Testis (tissue), 5 donors: ENCODE measurements at regions of chr18 and their contacts with region 1.

Region 1: DNA sequence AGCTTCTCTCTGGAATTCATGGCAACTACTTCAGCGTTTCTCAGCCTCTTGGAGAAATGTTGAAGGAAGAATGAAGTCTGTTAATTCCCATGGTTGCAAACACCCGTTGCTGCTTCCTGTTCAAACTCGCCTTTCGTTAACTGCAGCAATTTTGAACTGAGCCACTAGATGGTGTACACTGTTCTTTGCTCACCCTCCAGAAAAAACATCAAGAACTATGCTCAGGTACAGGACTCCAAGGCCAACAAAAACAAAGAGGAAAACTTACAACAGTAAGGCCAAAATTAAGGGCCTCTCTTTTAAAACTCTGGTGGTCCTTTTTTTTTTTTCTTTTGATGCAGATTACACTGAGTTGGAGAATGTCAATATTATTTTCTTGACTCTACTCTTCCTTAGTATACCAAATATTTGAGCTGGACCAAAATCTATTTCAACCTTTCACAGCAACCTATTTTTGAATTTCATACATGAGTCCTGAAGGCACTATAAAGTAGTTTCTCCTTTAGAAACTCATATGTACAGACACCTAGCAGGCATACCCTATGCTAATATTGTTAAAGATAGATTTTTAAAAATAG is 58.2 kb downstream of the KLHL14 start:
- DNase-seq: peak; percentile 48
- H3K4me3 ChIP-seq: no peak overlapping the region
- H3K27ac ChIP-seq: no peak overlapping the region
- H3K4me1 ChIP-seq: no peaks in the 10 kb centered on the region
- H3K27me3 ChIP-seq: no peaks in the 10 kb centered on the region
- CTCF ChIP-seq: peak; percentile 35 to 69 (median 56)
- POLR2A ChIP-seq: no peak

Region 2: DNA sequence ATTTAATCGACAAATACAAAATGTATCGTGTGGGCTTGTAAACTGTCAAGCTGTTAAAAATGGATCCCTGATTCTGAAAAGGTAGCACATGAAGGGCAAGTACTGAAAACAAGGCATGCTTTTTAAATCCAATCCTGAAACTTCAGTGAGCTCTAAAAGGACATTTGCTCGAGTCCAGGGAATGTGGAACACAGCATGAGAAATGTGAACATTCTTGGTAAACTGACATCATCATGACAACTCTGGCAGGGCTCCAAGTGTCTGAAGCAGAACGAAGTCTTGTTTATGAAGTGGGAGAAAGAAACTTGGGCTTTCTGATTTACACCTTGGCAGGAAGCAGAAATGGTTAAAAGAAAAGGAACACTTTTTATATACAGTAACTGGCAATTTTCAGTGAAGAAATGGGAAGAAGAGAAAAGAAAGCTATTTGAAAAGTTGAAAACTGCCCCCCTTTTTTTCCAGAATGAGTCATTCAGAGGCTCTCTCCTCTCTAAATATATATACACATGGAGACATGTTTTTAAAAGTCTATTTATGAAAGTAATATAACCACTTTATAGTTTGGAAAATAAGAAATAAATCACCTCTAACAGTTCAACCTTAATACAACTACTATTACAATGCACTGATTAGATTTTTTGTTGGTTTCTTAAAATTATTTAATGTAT is 364.8 kb before region 1 on chr18:
- intact Hi-C with region 1: no loop called
- DNase-seq: peak; percentile 83
- H3K4me3 ChIP-seq: no peak overlapping the region
- H3K27ac ChIP-seq: peak overlapping the region in 1 of 2 donors; percentile 33
- H3K4me1 ChIP-seq: no peaks in the 10 kb centered on the region
- H3K27me3 ChIP-seq: no peaks in the 10 kb centered on the region
- CTCF ChIP-seq: no peak
- POLR2A ChIP-seq: no peak

Region 3: DNA sequence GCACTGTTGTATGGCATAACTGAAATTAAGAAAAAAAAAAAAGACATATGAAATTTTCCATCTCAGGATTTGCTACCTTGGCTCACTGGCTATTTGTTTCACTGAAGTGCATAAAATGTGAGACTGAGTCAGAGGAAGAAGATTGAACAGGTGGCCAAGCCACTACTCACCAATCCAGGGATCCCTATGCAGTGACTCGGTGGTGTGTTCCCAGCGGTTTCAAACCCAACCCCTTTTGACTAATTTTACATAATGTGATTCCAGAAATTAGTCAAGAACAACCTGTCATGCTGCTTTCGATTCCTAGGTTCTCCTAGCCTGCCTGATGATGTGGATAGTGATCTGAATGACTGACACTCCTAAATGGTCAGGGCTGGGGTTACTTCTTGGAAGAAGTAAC is 19.1 kb before region 1 on chr18:
- intact Hi-C with region 1: loop called (anchors 1 kb)
- DNase-seq: no peak
- H3K4me3 ChIP-seq: no peak overlapping the region
- H3K27ac ChIP-seq: no peak overlapping the region
- H3K4me1 ChIP-seq: no peaks in the 10 kb centered on the region
- H3K27me3 ChIP-seq: no peaks in the 10 kb centered on the region
- CTCF ChIP-seq: no peak
- POLR2A ChIP-seq: no peak